WTC11 (cell line): ENCODE measurements at regions of chr9 and their contacts with region 1.

Region 1: GRCh38 chr9:99140685-99141314 is 35.9 kb downstream of the TGFBR1 start:
- DNase-seq: peak; percentile 55
- ATAC-seq: peak; percentile 97
- H3K4me3 Mint-ChIP-seq: no peak overlapping the region
- H3K27ac Mint-ChIP-seq: peak overlapping the region; percentile 4; the same call in 1 of the 2 replicates
- H3K4me1 Mint-ChIP-seq: peaks cover 4% of the 10 kb centered on the region
- H3K27me3 Mint-ChIP-seq: no peaks in the 10 kb centered on the region
- CTCF ChIP-seq: peak; percentile 55; the same call in 1 of the 2 replicates

Region 2: GRCh38 chr9:98848450-98849149 is 292.2 kb before region 1 on chr9:
- CTCF ChIA-PET with region 1: interaction called, 14 read pairs
- POLR2A ChIA-PET with region 1: interaction called, 3 read pairs
- DNase-seq: peak; percentile 91
- ATAC-seq: peak; percentile 99
- H3K4me3 Mint-ChIP-seq: no peak overlapping the region
- H3K27ac Mint-ChIP-seq: no peak overlapping the region
- H3K4me1 Mint-ChIP-seq: peaks cover 12% of the 10 kb centered on the region
- H3K27me3 Mint-ChIP-seq: no peaks in the 10 kb centered on the region
- CTCF ChIP-seq: peak; percentile 89

Region 3: DNA sequence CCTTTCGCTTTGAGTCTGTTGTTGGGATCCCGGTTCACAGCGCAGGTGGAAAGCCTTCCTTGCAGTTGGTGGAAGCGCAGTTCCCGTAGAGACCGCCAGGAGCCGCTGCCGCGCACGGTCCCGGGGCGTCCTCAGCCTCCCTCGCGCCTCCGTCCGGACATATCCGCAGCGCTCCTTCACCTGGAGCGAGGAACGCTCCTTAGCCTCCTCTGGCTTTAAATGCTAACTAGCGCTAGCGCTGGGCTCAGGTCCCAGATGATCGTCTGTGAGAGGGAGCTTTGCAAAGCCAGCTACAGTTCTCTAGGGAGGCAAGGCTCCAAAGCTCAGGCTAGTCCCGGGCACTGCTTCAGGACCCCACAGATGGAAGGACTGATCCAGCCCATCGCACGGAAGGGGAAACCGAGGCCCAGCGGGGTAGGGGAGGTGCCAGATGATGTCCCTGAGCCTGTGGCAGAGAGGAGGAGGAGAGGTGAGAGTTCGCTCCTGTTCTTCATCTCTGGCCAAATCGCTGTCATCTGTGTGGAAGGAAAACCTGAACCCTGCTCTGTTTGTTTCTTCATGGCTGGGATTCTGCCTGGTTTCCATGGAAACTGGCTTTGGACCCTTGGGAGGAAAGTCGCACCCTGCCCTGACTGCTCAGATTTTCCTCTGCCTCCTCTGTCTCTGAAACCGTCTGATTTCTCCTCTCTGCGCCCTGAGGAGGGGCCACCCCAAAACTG is 165.6 kb before region 1 on chr9:
- CTCF ChIA-PET with region 1: interaction called, 14 read pairs
- POLR2A ChIA-PET with region 1: no interaction called
- DNase-seq: peak; percentile 94
- ATAC-seq: peak; percentile 89
- H3K4me3 Mint-ChIP-seq: peak overlapping the region; percentile 8; the same call in 1 of the 2 replicates
- H3K27ac Mint-ChIP-seq: no peak overlapping the region
- H3K4me1 Mint-ChIP-seq: peaks cover 37% of the 10 kb centered on the region
- H3K27me3 Mint-ChIP-seq: peaks cover 33% of the 10 kb centered on the region
- CTCF ChIP-seq: peak; percentile 97

Region 4: GRCh38 chr9:99096409-99096808 is 44.4 kb before region 1 on chr9:
- CTCF ChIA-PET with region 1: no interaction called
- POLR2A ChIA-PET with region 1: no interaction called
- DNase-seq: no peak
- ATAC-seq: no peak
- H3K4me3 Mint-ChIP-seq: no peak overlapping the region
- H3K27ac Mint-ChIP-seq: no peak overlapping the region
- H3K4me1 Mint-ChIP-seq: peaks cover 9% of the 10 kb centered on the region
- H3K27me3 Mint-ChIP-seq: no peaks in the 10 kb centered on the region
- CTCF ChIP-seq: no peak